ENCODE measurements at regions of chr5 and their contacts with region 1.

Region 1: DNA sequence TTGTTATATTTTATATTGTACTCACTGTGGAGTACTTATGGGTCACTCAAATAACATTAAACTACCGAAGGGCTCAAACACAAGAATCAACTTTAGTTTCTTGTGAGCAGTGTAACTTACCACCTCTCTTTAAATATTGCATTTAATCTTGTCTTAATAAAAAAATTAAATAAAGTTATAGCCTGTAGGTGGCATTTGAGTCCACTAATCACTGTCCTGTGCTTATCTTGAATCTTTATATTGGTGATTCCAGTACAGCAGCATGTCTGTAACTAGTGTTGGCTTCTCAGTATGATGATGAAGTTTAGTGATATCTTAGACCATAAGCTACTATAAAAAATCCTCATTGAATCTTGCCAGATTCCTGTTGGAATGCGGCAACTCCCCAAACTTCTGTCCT is 313.8 kb downstream of the FAM170A start:
- DNase-seq: no peak
- H3K4me3 Mint-ChIP-seq: no peak overlapping the region
- H3K27ac Mint-ChIP-seq: no peak overlapping the region
- H3K4me1 Mint-ChIP-seq: no peaks in the 10 kb centered on the region
- H3K27me3 Mint-ChIP-seq: no peaks in the 10 kb centered on the region

Region 2: DNA sequence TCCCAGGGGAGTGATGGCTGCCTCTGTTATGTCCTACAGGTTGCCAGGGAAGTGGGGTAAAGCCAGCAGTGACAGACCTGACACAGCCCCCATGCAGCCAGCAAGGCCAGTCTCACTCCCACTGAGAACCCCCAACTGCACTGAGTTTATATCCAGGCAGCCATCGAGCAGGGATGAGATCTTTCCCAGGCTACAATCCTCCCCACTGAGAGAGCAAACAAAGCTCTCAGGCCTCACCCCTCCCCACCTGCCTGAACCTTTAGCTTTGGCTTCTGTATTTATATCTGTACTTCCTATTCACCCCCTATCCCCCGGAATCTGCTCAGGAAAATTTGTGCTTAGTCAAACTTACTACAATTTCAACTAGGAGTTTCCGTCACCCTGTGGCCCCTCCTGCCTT is 29.7 kb before region 1 on chr5:
- CTCF ChIA-PET with region 1: no interaction called
- intact Hi-C with region 1: no loop called
- DNase-seq: no peak
- H3K4me3 Mint-ChIP-seq: no peak overlapping the region
- H3K27ac Mint-ChIP-seq: no peak overlapping the region
- H3K4me1 Mint-ChIP-seq: no peaks in the 10 kb centered on the region
- H3K27me3 Mint-ChIP-seq: no peaks in the 10 kb centered on the region

Region 3: DNA sequence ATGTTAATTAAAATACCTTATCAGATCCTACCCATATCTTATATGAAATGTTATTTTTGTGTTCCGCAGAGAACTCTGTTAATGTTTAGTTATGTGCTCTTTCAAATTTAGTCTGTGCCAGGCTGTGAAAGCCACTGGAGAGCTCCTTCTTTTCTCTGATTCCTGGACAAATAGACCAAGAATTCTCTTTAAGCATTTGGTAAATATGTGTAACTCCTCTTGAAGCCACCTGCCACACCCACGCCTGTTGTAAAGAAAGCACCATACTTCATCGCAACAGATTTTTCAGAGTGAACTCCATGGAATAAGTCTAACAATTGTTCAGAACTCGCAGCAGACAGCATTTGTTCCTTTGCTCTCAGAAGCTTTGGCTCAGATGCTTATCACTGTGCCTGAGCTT is 12.7 kb before region 1 on chr5:
- CTCF ChIA-PET with region 1: no interaction called
- intact Hi-C with region 1: no loop called
- DNase-seq: no peak
- H3K4me3 Mint-ChIP-seq: no peak overlapping the region
- H3K27ac Mint-ChIP-seq: no peak overlapping the region
- H3K4me1 Mint-ChIP-seq: no peaks in the 10 kb centered on the region
- H3K27me3 Mint-ChIP-seq: no peaks in the 10 kb centered on the region

Region 4: GRCh38 chr5:120457839-120458507 is 514.8 kb after region 1 on chr5:
- CTCF ChIA-PET with region 1: no interaction called
- intact Hi-C with region 1: loop called (anchors 10 kb)
- DNase-seq: peak; percentile 53
- H3K4me3 Mint-ChIP-seq: peak overlapping the region; percentile 30
- H3K27ac Mint-ChIP-seq: no peak overlapping the region
- H3K4me1 Mint-ChIP-seq: no peaks in the 10 kb centered on the region
- H3K27me3 Mint-ChIP-seq: peaks cover 10% of the 10 kb centered on the region

Measured in activated naive CD4-positive, alpha-beta T cell treated with anti-CD3 and anti-CD28 coated beads for 36 hours (primary cell).